ENCODE measurements at regions of chr7 and their contacts with region 1.

Region 1: GRCh38 chr7:107133396-107133795 is 35.4 kb upstream of the HBP1 start:
- DNase-seq: no peak
- ATAC-seq: no peak
- H3K4me3 ChIP-seq: no peak overlapping the region
- H3K27ac ChIP-seq: no peak overlapping the region
- H3K4me1 ChIP-seq: no peaks in the 10 kb centered on the region
- H3K27me3 ChIP-seq: no peaks in the 10 kb centered on the region
- CTCF ChIP-seq: no peak
- EP300 ChIP-seq: no peak
- POLR2A ChIP-seq: no peak
- RAD21 ChIP-seq: no peak

Region 2: DNA sequence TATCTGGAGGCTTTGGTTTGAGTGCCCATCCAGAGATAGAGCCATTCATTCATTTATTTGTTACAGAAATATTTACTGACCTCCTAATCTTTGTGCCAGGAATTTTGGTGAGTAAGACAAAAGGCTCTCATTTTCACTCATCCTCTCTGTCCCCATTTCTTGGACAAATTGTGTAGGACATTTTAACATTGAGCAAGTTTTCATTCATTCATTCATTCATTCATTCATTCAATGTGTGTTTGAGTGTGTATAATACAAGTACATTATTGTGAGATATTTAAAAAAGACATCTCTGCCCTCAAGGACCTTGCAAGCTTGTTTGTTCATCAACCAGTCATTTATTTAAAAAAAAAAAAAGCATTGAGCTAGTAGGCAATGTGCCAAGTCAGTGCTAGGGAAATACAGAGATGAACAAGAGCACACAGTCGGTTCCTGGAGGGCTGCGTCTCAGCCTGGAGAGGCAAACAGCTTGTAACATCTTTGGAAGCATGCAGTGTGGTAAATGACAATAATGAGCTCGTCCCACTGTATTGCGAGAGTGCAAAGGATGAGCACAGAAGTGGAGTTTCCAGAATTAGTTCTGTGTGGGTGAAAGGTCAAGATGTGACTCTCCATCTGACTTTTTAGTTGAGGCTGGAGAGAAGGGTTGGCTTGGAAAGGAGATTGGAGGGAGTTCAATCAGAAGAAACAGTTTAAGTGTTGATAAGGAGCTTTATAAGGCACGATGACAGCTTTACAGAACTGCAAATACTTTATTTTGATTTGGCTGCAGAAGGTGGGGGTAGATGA is 15.1 kb before region 1 on chr7:
- CTCF ChIA-PET with region 1: no interaction called
- POLR2A ChIA-PET with region 1: interaction called, 14 read pairs
- in situ Hi-C with region 1: no loop called
- intact Hi-C with region 1: no loop called
- DNase-seq: peak in 1 of 4 experiments; percentile 56
- ATAC-seq: no peak; the same call in 2 of the 3 replicates
- H3K4me3 ChIP-seq: no peak overlapping the region
- H3K27ac ChIP-seq: no peak overlapping the region
- H3K4me1 ChIP-seq: peaks cover 0 to 31% of the 10 kb centered on the region in 2 experiments; a peak in 3 of 5 replicates
- H3K27me3 ChIP-seq: no peaks in the 10 kb centered on the region
- CTCF ChIP-seq: no peak
- EP300 ChIP-seq: no peak
- POLR2A ChIP-seq: no peak
- RAD21 ChIP-seq: no peak

Measured in K562 (cell line).